Common myeloid progenitor, CD34-positive (primary cell): ENCODE measurements at regions of chr10 and their contacts with region 1.

Region 1: GRCh38 chr10:96478317-96478716 is 35.4 kb downstream of the TLL2 start:
- DNase-seq: no peak
- H3K4me3 ChIP-seq: no peak overlapping the region
- H3K27ac ChIP-seq: no peak overlapping the region
- H3K4me1 ChIP-seq: no peaks in the 10 kb centered on the region
- H3K27me3 ChIP-seq: peaks cover 0 to 9% (median 4%) of the 10 kb centered on the region in 5 experiments

Region 2: DNA sequence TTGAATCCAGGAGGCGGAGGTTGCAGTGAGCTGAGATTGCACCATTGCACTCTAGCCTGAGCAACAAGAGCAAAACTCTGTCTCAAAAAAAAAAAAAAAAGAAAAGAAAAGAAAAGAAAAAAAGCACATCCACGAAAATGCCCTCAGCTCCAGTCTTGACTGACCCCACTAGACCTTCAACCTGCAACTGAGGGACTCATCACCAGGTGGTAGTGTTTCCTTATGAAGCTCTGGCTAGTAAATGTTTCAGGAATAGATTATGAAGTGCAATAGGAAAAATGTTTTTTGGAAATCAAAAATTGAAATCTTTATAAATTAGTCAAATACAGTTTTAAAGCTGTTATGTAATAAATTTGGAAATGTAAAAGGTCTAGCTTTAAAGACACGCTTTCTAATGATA is 13.0 kb after region 1 on chr10:
- CTCF ChIA-PET with region 1: interaction called, 17 read pairs
- POLR2A ChIA-PET with region 1: no interaction called
- DNase-seq: no peak
- H3K4me3 ChIP-seq: no peak overlapping the region
- H3K27ac ChIP-seq: no peak overlapping the region
- H3K4me1 ChIP-seq: no peaks in the 10 kb centered on the region
- H3K27me3 ChIP-seq: peaks cover 0 to 8% (median 4%) of the 10 kb centered on the region in 5 experiments